ENCODE measurements at regions of chr7 and their contacts with region 1.

Region 1: GRCh38 chr7:35985126-35985754 is 167.8 kb upstream of the EEPD1 start:
- DNase-seq: peak; percentile 79
- ATAC-seq: peak; percentile 98
- H3K4me3 Mint-ChIP-seq: no peak overlapping the region
- H3K27ac Mint-ChIP-seq: no peak overlapping the region
- H3K4me1 Mint-ChIP-seq: no peaks in the 10 kb centered on the region
- H3K27me3 Mint-ChIP-seq: peaks cover 4% of the 10 kb centered on the region

Region 2: DNA sequence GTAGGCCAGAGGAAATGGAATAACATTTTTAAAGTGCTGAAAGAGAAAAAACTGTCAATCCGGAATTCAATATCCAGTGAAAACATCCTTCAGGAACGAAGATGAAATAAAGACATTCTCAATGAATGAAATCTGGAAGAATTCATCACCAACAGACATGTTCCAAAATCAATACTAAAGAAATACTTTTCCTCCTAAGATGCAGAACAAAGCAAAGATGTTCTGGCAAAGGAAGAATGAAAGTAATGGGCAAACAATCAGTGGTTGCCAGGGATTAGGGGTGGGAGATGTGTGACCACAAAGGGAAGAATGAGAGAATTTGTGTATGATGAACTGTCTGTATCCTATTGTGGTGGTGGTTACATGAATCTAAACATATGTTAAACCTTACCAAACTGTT is 115.0 kb after region 1 on chr7:
- CTCF ChIA-PET with region 1: no interaction called
- DNase-seq: no peak
- ATAC-seq: no peak
- H3K4me3 Mint-ChIP-seq: no peak overlapping the region
- H3K27ac Mint-ChIP-seq: no peak overlapping the region
- H3K4me1 Mint-ChIP-seq: no peaks in the 10 kb centered on the region
- H3K27me3 Mint-ChIP-seq: peaks cover 32% of the 10 kb centered on the region

Region 3: GRCh38 chr7:36291387-36292316 is 306.4 kb after region 1 on chr7:
- CTCF ChIA-PET with region 1: interaction called, 57 read pairs
- DNase-seq: peak; percentile 75
- ATAC-seq: peak; percentile 58
- H3K4me3 Mint-ChIP-seq: peak overlapping the region; percentile 57
- H3K27ac Mint-ChIP-seq: no peak overlapping the region
- H3K4me1 Mint-ChIP-seq: peaks cover 36% of the 10 kb centered on the region
- H3K27me3 Mint-ChIP-seq: no peaks in the 10 kb centered on the region

Measured in activated CD8-positive, alpha-beta memory T cell treated with anti-CD3 and anti-CD28 coated beads, Interleukin-2, amount 10 ng/mL, durations not matched to agents 7 days and 5 days (primary cell).